Colonic mucosa (tissue), 4 donors: ENCODE measurements at regions of chr3 and their contacts with region 1.

Region 1: DNA sequence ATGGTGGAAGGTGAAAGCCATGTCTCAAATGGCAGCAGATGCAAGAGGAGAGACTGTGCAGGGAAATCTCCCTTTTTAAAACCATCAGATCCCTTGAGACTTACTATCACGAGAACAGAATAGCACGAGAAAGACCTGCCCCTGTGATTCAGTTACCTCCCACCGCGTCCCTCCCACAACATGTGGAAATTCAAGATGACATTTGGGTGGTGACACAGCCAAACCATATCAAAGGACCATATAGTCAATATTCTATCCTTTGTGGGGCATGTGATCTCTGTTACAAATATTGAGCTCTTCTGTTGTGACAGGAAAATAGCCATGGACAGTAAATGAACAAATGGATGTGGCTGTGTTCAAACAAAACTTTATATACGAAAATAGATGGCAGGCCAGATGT is 77.2 kb upstream of the ACKR4 start:
- DNase-seq: no peak
- H3K4me3 ChIP-seq: no peak overlapping the region
- H3K27ac ChIP-seq: no peak overlapping the region
- H3K4me1 ChIP-seq: no peaks in the 10 kb centered on the region
- H3K27me3 ChIP-seq: no peaks in the 10 kb centered on the region
- CTCF ChIP-seq: no peak

Region 2: GRCh38 chr3:132456571-132456970 is 63.3 kb before region 1 on chr3:
- intact Hi-C with region 1: loop called (anchors 10 kb)
- DNase-seq: no peak
- H3K4me3 ChIP-seq: no peak overlapping the region
- H3K27ac ChIP-seq: no peak overlapping the region
- H3K4me1 ChIP-seq: no peaks in the 10 kb centered on the region
- H3K27me3 ChIP-seq: no peaks in the 10 kb centered on the region
- CTCF ChIP-seq: no peak

Region 3: GRCh38 chr3:132843851-132844553 is 324.1 kb after region 1 on chr3:
- intact Hi-C with region 1: no loop called
- DNase-seq: no peak
- H3K4me3 ChIP-seq: no peak overlapping the region
- H3K27ac ChIP-seq: no peak overlapping the region
- H3K4me1 ChIP-seq: no peaks in the 10 kb centered on the region
- H3K27me3 ChIP-seq: no peaks in the 10 kb centered on the region
- CTCF ChIP-seq: no peak